Activated T-helper 2 cell treated with anti-CD3 and anti-CD28 coated beads, Interferon-gamma antibody, Interleukin-2, Interleukin-4, amounts not matched to agents 10 μg/mL and 5 μg/mL and 100 μg/mL, durations not matched to agents 14 hours and 24 hours and 36 hours (primary cell): ENCODE measurements at regions of chr9 and their contacts with region 1.

Region 1: GRCh38 chr9:77712533-77713130 is 64.5 kb upstream of the GNA14 start:
- DNase-seq: no peak
- H3K4me3 Mint-ChIP-seq: no peak overlapping the region
- H3K27ac Mint-ChIP-seq: no peak overlapping the region
- H3K4me1 Mint-ChIP-seq: peaks cover 17% of the 10 kb centered on the region
- H3K27me3 Mint-ChIP-seq: no peaks in the 10 kb centered on the region

Region 2: GRCh38 chr9:77744841-77745430 is 32.3 kb after region 1 on chr9:
- intact Hi-C with region 1: loop called (anchors 5 kb)
- DNase-seq: no peak
- H3K4me3 Mint-ChIP-seq: peak overlapping the region; percentile 35
- H3K27ac Mint-ChIP-seq: peak overlapping the region; percentile 68
- H3K4me1 Mint-ChIP-seq: peaks cover 41% of the 10 kb centered on the region
- H3K27me3 Mint-ChIP-seq: no peaks in the 10 kb centered on the region